ENCODE measurements at regions of chr10 and their contacts with region 1.

Region 1: DNA sequence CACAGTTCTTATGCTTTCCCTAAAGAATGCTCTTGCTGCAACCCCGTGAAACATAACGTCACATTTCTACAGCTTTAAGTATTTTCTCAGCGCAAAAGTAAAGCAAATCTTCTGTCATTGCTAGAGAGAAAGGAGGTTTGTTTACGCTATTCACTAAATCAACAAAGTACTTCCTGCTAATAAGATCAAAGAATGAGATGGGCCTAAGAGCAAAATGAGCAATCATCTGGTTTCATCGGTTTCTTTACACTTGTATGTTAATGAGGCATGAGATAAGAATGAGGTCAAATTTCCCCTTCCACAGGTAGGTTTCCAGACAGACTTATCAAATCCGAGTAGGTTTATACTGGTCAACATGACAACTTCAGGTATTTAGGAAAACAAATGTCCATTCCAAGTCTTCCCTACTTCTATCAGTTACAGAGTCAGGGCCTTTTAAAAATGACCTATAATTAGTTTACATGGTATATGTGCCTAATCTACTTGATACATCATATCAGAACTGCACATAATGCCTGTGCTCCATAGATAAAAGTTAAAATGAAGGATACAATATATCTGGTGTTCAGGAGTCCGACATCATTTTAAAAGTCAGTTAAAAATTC is 8.4 kb downstream of the USP6NL start:
- DNase-seq: peak in 1 of 9 experiments; percentile 39
- ATAC-seq: no peak
- H3K4me3 ChIP-seq: no peak overlapping the region
- H3K4me3 Mint-ChIP-seq: no peak overlapping the region
- H3K27ac ChIP-seq: no peak overlapping the region
- H3K27ac Mint-ChIP-seq: no peak overlapping the region
- H3K4me1 ChIP-seq: peaks cover 19% of the 10 kb centered on the region
- H3K4me1 Mint-ChIP-seq: peaks cover 35% of the 10 kb centered on the region
- H3K27me3 ChIP-seq: no peaks in the 10 kb centered on the region
- H3K27me3 Mint-ChIP-seq: no peaks in the 10 kb centered on the region
- CTCF ChIP-seq: no peak

Region 2: GRCh38 chr10:11434324-11434723 is 168.7 kb before region 1 on chr10:
- CTCF ChIA-PET with region 1: no interaction called
- POLR2A ChIA-PET with region 1: no interaction called
- intact Hi-C with region 1: no loop called
- DNase-seq: peak in 1 of 9 experiments; percentile 25
- ATAC-seq: no peak
- H3K4me3 ChIP-seq: no peak overlapping the region
- H3K4me3 Mint-ChIP-seq: no peak overlapping the region
- H3K27ac ChIP-seq: no peak overlapping the region
- H3K27ac Mint-ChIP-seq: no peak overlapping the region
- H3K4me1 ChIP-seq: no peaks in the 10 kb centered on the region
- H3K4me1 Mint-ChIP-seq: peaks cover 2% of the 10 kb centered on the region
- H3K27me3 ChIP-seq: no peaks in the 10 kb centered on the region
- H3K27me3 Mint-ChIP-seq: no peaks in the 10 kb centered on the region
- CTCF ChIP-seq: no peak

Region 3: GRCh38 chr10:11525503-11525902 is 77.5 kb before region 1 on chr10:
- CTCF ChIA-PET with region 1: no interaction called
- POLR2A ChIA-PET with region 1: no interaction called
- intact Hi-C with region 1: loop called in 1 of 2 experiments (anchors 5 kb)
- DNase-seq: no peak
- ATAC-seq: no peak
- H3K4me3 ChIP-seq: no peak overlapping the region
- H3K4me3 Mint-ChIP-seq: no peak overlapping the region
- H3K27ac ChIP-seq: no peak overlapping the region
- H3K27ac Mint-ChIP-seq: no peak overlapping the region
- H3K4me1 ChIP-seq: peaks cover 6% of the 10 kb centered on the region
- H3K4me1 Mint-ChIP-seq: peaks cover 24% of the 10 kb centered on the region
- H3K27me3 ChIP-seq: no peaks in the 10 kb centered on the region
- H3K27me3 Mint-ChIP-seq: peaks cover 3% of the 10 kb centered on the region
- CTCF ChIP-seq: no peak

Measured in CD8-positive, alpha-beta T cell (primary cell).